HCT116 (cell line): ENCODE measurements at regions of chr2 and their contacts with region 1.

Region 1: GRCh38 chr2:11129598-11130449 is 25.4 kb upstream of the SLC66A3 start:
- DNase-seq: peak; percentile 65
- ATAC-seq: peak; percentile 90
- H3K4me3 ChIP-seq: peak overlapping the region; percentile 33 to 54
- H3K27ac ChIP-seq: peak overlapping the region; percentile 39
- H3K4me1 ChIP-seq: peaks cover 9 to 41% of the 10 kb centered on the region in 2 experiments
- H3K27me3 ChIP-seq: no peaks in the 10 kb centered on the region
- CTCF ChIP-seq: peak in 2 of 3 experiments; percentile 63 to 66; a peak in 4 of 6 replicates
- POLR2A ChIP-seq: no peak
- RAD21 ChIP-seq: no peak

Region 2: DNA sequence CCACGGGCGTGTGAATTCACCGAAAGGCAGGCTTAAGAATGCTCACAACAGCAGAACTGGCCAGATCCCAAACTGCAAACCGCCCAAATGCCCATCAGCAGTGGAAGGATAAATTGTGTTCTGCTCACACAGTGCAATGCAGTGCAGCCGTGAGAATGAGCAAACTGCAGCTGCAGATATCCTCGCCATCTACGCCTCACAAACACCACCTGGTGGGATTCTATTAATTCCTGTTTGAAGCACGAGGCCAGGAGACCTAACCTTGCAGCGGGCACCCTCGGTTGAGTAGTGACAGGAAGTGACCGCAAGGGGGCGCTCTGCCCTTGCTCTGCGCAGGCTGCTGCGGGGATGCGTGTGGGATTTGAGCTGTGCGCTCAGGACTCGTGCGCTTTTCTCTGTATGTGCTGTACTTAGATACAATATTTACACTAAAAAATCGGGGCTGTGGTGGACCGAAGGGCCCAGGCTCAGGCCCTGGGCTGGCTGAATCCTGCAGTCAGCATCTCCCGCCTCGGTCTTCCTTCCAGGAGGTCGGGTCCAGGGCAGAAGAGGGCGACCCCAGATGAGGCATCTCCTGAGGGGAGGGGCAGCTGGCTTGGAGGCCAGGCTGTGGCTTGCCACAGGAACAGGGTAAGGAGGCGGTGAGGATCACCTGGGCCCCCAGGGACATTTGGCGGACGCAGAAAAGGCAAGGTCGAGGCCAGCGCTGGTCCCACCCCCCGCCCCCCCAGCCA is 297.5 kb before region 1 on chr2:
- CTCF ChIA-PET with region 1: interaction called, 173 read pairs
- POLR2A ChIA-PET with region 1: interaction called, 10 read pairs
- RAD21 ChIA-PET with region 1: interaction called, 13 read pairs
- intact Hi-C with region 1: loop called (anchors 1 kb)
- DNase-seq: peak; percentile 69
- ATAC-seq: peak; percentile 81
- H3K4me3 ChIP-seq: no peak overlapping the region
- H3K27ac ChIP-seq: no peak overlapping the region
- H3K4me1 ChIP-seq: peaks cover 0 to 23% of the 10 kb centered on the region in 2 experiments; a peak in 2 of 4 replicates
- H3K27me3 ChIP-seq: no peaks in the 10 kb centered on the region
- CTCF ChIP-seq: peak; percentile 91 to 98 (median 98)
- POLR2A ChIP-seq: no peak
- RAD21 ChIP-seq: peak; percentile 99

Region 3: DNA sequence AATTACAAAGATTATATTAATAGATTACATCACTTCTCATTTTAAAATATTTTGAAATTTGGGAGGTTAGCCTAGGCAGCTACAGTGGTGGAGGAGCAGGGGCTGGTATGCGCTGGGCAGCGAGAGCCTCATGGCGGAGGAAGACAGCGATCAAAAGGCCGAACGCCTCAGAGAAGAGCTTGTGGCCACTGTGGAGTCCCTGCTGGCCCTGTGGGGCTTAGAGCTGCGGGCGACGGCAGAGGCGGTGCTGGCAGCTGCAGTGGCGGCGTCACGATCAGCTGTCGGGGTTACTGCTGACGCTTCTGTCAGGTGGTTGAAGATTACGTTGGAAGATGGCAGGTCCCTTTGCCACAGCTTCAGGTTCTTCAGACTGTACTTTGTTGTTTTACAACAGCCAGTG is 127.3 kb after region 1 on chr2:
- CTCF ChIA-PET with region 1: no interaction called
- POLR2A ChIA-PET with region 1: no interaction called
- RAD21 ChIA-PET with region 1: no interaction called
- intact Hi-C with region 1: no loop called
- DNase-seq: no peak
- ATAC-seq: no peak
- H3K4me3 ChIP-seq: no peak overlapping the region
- H3K27ac ChIP-seq: no peak overlapping the region
- H3K4me1 ChIP-seq: no peaks in the 10 kb centered on the region
- H3K27me3 ChIP-seq: no peaks in the 10 kb centered on the region
- CTCF ChIP-seq: no peak
- POLR2A ChIP-seq: no peak
- RAD21 ChIP-seq: no peak

Region 4: DNA sequence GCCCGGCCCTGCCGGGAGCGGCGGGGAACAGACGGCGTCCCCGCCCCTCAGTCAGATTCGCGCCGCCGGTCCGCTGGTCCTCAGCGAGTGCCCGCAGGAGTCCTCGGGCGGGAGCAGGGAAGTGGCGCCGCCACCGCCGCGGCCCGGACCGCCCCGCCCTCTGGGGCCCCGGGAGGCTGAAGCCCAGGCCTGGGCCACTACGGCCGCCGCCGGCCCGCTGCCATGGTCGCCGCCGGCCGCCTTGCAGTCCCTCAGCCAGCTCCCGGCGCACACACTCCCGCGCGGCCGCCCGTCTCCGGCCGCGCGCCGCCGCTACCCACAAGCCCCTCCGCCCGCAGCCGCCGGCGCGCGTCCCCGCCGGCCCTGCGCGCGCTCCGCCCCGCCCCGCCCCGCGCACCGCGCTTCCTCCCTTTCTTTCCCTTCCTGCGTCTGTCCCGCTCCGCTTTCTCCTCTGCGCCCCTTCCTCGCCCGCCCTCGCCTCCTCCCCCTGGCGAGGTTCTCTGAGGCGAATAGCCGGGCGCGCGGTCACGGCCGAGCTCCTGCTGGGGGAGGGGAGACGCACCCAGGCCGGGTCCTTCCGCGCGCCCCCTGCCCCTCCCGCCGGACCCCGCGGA is 214.6 kb after region 1 on chr2 and contains the start of gene ROCK2:
- CTCF ChIA-PET with region 1: no interaction called
- POLR2A ChIA-PET with region 1: interaction called, 3 read pairs
- RAD21 ChIA-PET with region 1: interaction called in 1 of 2 experiments, 4 read pairs
- intact Hi-C with region 1: loop called (anchors 2 kb)
- DNase-seq: peak; percentile 53
- ATAC-seq: peak; percentile 73
- H3K4me3 ChIP-seq: peak within 1 kb of the TSS; percentile 81 to 92
- H3K27ac ChIP-seq: peak within 1 kb of the TSS; percentile 95
- H3K4me1 ChIP-seq: peaks cover 48 to 54% of the 10 kb centered on the region in 2 experiments
- H3K27me3 ChIP-seq: no peaks in the 10 kb centered on the region
- CTCF ChIP-seq: no peak
- POLR2A ChIP-seq: peak; percentile 61
- RAD21 ChIP-seq: no peak
- total RNA-seq, gene ROCK2: 48.0 TPM

Region 5: DNA sequence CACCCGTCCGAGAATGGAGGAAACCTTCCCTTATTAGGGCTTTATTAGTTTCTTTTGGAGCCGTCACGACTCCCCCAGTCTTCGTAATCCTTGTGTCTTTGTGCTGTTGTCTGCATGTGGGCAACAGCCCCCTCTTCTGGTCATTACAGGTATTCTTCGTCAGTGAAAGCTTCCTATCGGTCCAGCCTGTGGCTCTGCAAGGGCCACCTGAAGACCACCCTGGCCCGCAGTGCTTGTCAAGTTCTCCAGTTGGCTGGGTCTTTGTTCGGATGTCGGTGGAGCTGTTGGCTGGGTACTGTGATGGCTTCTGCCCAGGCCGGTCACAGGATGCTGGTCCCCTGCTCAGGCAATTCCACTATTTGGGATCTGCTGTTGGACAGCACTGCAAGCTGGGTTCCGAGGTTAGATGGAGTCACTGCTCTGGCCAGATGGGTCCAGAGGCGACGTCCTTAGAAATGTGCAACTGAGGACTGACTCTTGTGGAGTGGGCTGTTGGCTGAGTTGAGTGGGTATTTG is 317.0 kb after region 1 on chr2:
- CTCF ChIA-PET with region 1: interaction called, 25 read pairs
- POLR2A ChIA-PET with region 1: no interaction called
- RAD21 ChIA-PET with region 1: interaction called, 4 to 7 read pairs
- intact Hi-C with region 1: loop called (anchors 1 kb)
- DNase-seq: peak; percentile 22
- ATAC-seq: peak; percentile 82
- H3K4me3 ChIP-seq: no peak overlapping the region
- H3K27ac ChIP-seq: no peak overlapping the region
- H3K4me1 ChIP-seq: no peaks in the 10 kb centered on the region
- H3K27me3 ChIP-seq: no peaks in the 10 kb centered on the region
- CTCF ChIP-seq: peak; percentile 59 to 88 (median 70); a peak in 5 of 6 replicates
- POLR2A ChIP-seq: no peak
- RAD21 ChIP-seq: peak; percentile 76

Region 6: DNA sequence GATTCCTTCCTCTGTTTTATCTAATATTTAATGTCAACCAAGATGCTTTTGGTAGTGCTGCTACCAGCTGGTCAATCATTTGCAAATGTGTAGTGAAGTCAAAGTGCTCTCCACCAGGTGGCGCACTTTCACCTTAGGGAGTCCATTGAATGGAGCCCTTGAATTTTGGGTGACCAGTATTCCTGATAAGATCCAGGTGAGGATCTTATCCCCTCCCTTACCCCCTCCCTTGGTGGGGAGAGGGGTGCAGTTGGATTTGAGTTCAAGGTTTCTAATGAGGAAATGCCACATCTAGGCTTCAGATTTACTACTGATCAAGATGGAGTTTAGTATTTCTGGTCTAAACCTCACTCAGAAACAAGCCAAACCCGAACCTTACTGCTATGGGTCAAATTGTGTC is 348.2 kb after region 1 on chr2:
- CTCF ChIA-PET with region 1: interaction called, 12 read pairs
- POLR2A ChIA-PET with region 1: no interaction called
- RAD21 ChIA-PET with region 1: no interaction called
- intact Hi-C with region 1: no loop called
- DNase-seq: peak; percentile 76
- ATAC-seq: peak; percentile 70
- H3K4me3 ChIP-seq: no peak overlapping the region
- H3K27ac ChIP-seq: no peak overlapping the region
- H3K4me1 ChIP-seq: peaks cover 0 to 1% of the 10 kb centered on the region in 2 experiments; a peak in 1 of 4 replicates
- H3K27me3 ChIP-seq: no peaks in the 10 kb centered on the region
- CTCF ChIP-seq: peak; percentile 74 to 96 (median 91)
- POLR2A ChIP-seq: no peak
- RAD21 ChIP-seq: peak; percentile 92

Region 7: DNA sequence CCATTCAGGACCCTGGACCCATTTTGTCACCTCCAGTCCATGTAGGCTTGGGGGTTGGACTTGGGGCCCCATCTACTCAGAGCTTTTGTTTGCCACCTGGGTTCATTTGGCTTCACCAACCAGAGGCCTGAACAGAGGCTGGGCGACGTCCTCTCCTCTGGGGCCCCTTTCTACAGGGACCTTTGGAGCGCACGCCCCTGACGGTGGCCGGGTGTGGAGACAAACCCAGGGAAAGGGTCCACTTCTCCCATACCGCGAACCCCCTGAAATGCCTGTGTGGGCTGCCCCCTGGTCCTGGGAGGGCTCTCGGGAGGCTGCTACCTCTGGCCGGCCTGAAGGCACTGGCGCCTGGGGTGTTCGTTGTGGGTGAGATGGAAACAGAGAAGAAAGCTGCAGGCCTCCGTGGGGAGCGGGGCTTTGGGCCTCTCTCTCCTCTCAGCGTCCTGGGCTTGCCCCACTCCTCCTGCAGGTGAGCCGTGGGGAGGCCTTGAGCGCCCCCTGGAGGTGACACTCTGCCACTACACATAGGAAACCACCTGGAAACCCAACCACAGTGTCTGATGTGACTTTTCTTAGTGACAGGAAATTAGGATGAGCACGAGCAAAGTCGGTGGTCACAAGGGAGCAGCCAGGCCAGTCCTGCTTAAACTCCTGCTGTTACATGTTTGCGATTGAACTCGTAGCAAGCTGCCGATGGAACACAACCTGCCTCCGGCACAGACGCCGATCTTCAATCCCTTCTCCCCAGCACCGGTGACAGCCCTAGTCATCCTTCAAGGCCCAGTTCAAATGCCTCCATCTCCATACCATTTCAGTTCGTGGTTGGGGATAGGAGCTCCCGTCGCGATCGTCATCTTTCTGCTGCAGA is 552.1 kb after region 1 on chr2:
- CTCF ChIA-PET with region 1: interaction called, 7 read pairs
- POLR2A ChIA-PET with region 1: no interaction called
- RAD21 ChIA-PET with region 1: no interaction called
- intact Hi-C with region 1: loop called (anchors 5 kb)
- DNase-seq: peak; percentile 19
- ATAC-seq: peak; percentile 90
- H3K4me3 ChIP-seq: no peak overlapping the region
- H3K27ac ChIP-seq: no peak overlapping the region
- H3K4me1 ChIP-seq: peaks cover 9 to 12% of the 10 kb centered on the region in 2 experiments; a peak in 2 of 4 replicates
- H3K27me3 ChIP-seq: no peaks in the 10 kb centered on the region
- CTCF ChIP-seq: peak; percentile 70 to 99 (median 99)
- POLR2A ChIP-seq: no peak
- RAD21 ChIP-seq: peak; percentile 83